ENCODE measurements at regions of chr14 and their contacts with region 1.

Region 1: GRCh38 chr14:67695394-67695949 is at the start of gene RDH11:
- DNase-seq: peak; percentile 86
- ATAC-seq: peak; percentile 93
- H3K4me3 Mint-ChIP-seq: peak within 1 kb of the TSS; percentile 96
- H3K27ac Mint-ChIP-seq: peak within 1 kb of the TSS; percentile 99
- H3K4me1 Mint-ChIP-seq: peaks cover 11% of the 10 kb centered on the region
- H3K27me3 Mint-ChIP-seq: peaks cover 11% of the 10 kb centered on the region
- CTCF ChIP-seq: no peak
- total RNA-seq, gene RDH11: 103 to 114 TPM (median 110 TPM) in 3 replicates

Region 2: DNA sequence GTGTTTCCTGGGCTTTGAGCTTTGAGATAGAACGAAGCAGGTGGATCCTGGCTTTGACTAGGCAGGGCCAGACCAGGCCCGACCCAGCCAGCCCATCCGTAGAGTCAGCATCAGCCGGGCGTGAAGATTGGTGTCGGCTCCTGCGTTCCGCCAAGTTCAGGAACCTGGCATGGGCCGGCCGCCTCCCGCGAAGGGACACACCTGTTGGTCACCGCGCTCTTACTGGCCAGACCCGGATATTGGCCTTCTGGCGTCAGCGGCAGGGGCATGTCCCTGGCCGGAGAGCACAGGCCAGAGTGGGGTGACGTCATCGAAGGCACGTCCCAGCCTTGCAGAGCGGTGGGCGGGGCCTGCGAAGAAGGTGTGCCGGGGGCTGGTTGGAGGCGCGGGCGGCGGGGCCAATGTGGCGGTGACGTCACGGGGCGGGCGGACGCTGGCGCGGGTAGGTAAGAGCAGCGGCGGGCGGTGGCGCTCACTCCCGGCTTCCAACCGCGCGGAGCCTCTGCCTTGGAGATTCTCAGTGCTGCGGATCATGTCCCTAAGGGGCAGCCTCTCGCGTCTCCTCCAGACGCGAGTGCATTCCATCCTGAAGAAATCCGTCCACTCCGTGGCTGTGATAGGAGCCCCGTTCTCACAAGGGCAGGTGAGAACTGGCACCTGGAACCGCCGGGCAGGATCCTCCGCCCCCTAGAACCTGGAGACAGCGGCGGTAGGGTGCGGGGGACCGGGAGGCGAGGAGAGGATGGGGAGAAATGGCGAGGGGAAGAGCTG is 75.8 kb before region 1 on chr14 and contains the start of gene ARG2:
- CTCF ChIA-PET with region 1: interaction called, 7 read pairs
- POLR2A ChIA-PET with region 1: interaction called, 17 read pairs
- DNase-seq: peak; percentile 100
- ATAC-seq: peak; percentile 91
- H3K4me3 Mint-ChIP-seq: peak within 1 kb of the TSS; percentile 92
- H3K27ac Mint-ChIP-seq: peak within 1 kb of the TSS; percentile 92
- H3K4me1 Mint-ChIP-seq: peaks cover 35% of the 10 kb centered on the region
- H3K27me3 Mint-ChIP-seq: peaks cover 46% of the 10 kb centered on the region
- CTCF ChIP-seq: no peak
- total RNA-seq, gene ARG2: 29.8 to 38.5 TPM (median 33.0 TPM) in 3 replicates

Region 3: DNA sequence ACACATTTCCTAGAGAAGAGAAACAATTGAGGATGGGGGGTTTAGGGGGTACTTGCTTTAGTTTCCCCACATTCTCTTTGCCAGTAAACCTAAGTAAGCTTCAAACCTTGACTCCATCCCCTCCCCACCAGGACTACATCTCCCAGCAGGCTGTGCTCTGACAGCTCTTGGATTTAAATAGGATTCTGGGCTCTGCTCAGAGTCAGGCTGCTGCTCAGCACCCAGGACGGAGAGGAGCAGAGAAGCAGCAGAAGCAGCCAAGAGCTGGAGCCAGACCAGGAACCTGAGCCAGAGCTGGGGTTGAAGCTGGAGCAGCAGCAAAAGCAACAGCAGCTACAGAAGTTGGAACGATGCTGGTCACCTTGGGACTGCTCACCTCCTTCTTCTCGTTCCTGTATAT is 26.8 kb after region 1 on chr14:
- CTCF ChIA-PET with region 1: interaction called, 3 read pairs
- POLR2A ChIA-PET with region 1: interaction called, 12 read pairs
- DNase-seq: peak; percentile 35
- ATAC-seq: peak; percentile 99
- H3K4me3 Mint-ChIP-seq: peak overlapping the region; percentile 47
- H3K27ac Mint-ChIP-seq: no peak overlapping the region
- H3K4me1 Mint-ChIP-seq: no peaks in the 10 kb centered on the region; the same call in 1 of the 2 replicates
- H3K27me3 Mint-ChIP-seq: peaks cover 13% of the 10 kb centered on the region
- CTCF ChIP-seq: no peak

Region 4: GRCh38 chr14:67729072-67729885 is 33.8 kb after region 1 on chr14:
- CTCF ChIA-PET with region 1: interaction called, 3 read pairs
- POLR2A ChIA-PET with region 1: interaction called, 21 read pairs
- DNase-seq: peak; percentile 79
- ATAC-seq: peak; percentile 99
- H3K4me3 Mint-ChIP-seq: peak overlapping the region; percentile 43
- H3K27ac Mint-ChIP-seq: peak overlapping the region; percentile 57
- H3K4me1 Mint-ChIP-seq: peaks cover 21% of the 10 kb centered on the region
- H3K27me3 Mint-ChIP-seq: no peaks in the 10 kb centered on the region; the same call in 1 of the 2 replicates
- CTCF ChIP-seq: no peak